SK-N-SH (cell line): ENCODE measurements at regions of chr20 and their contacts with region 1.

Region 1: DNA sequence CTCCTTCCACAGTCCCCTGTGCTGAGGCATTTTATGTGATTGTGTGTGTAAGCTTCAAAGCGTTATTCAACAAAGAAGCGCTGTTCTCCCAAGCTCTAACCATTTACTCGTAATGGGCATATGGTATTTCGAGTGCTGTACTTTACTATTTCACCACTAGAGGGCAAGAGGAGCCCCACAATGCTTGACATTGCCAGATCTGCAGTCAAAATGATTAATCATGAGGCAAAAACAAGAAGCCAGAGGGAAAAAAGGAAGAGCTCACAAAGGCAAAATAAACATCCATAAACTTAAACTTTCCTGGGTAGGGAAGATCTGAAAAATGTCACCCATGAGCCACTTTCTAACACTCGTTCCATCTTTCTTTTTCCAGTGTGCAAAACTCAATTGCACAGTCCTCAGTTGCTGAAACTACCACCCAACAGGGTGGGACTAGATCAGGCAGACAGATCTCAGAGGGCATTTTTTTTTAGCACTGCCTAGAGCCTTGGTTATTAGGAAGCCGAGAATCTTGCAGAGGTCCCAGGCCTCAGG is 215.0 kb upstream of the PLCB4 start:
- DNase-seq: peak; percentile 61
- H3K4me3 ChIP-seq: peak overlapping the region in 1 of 2 experiments; percentile 9; a peak in 1 of 4 replicates
- H3K27ac ChIP-seq: peak overlapping the region in 1 of 2 experiments; percentile 22; a peak in 1 of 4 replicates
- H3K4me1 ChIP-seq: peaks cover 3 to 11% of the 10 kb centered on the region in 2 experiments
- H3K27me3 ChIP-seq: no peaks in the 10 kb centered on the region
- CTCF ChIP-seq: peak; percentile 95
- EP300 ChIP-seq: no peak
- RAD21 ChIP-seq: peak; percentile 90

Region 2: DNA sequence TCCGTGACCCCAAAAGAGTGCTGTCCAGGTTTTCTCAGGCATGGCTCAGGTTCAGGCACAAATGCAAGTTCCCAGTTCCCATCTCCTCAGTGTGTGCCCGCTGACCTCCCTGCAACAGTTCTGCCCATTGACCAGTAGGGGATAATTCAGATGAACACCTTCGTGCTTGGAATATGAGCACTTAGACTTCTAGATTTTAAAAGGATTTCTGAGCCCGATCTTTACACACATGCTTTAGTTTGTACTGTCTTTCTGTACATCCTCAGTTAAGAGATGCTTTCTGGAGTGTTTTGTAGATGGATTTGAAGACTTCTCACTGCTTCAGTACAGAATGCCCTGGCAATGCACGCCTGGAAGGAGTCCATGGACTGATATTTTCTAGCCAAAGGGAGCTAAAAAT is 24.6 kb before region 1 on chr20:
- CTCF ChIA-PET with region 1: interaction called, 12 read pairs
- POLR2A ChIA-PET with region 1: no interaction called
- DNase-seq: no peak
- H3K4me3 ChIP-seq: no peak overlapping the region
- H3K27ac ChIP-seq: no peak overlapping the region
- H3K4me1 ChIP-seq: no peaks in the 10 kb centered on the region
- H3K27me3 ChIP-seq: no peaks in the 10 kb centered on the region
- CTCF ChIP-seq: peak; percentile 35
- EP300 ChIP-seq: no peak
- RAD21 ChIP-seq: no peak

Region 3: GRCh38 chr20:8842525-8842924 is 11.3 kb before region 1 on chr20:
- CTCF ChIA-PET with region 1: interaction called, 21 read pairs
- POLR2A ChIA-PET with region 1: no interaction called
- DNase-seq: no peak
- H3K4me3 ChIP-seq: no peak overlapping the region
- H3K27ac ChIP-seq: no peak overlapping the region
- H3K4me1 ChIP-seq: no peaks in the 10 kb centered on the region
- H3K27me3 ChIP-seq: no peaks in the 10 kb centered on the region
- CTCF ChIP-seq: no peak
- EP300 ChIP-seq: no peak
- RAD21 ChIP-seq: no peak

Region 4: DNA sequence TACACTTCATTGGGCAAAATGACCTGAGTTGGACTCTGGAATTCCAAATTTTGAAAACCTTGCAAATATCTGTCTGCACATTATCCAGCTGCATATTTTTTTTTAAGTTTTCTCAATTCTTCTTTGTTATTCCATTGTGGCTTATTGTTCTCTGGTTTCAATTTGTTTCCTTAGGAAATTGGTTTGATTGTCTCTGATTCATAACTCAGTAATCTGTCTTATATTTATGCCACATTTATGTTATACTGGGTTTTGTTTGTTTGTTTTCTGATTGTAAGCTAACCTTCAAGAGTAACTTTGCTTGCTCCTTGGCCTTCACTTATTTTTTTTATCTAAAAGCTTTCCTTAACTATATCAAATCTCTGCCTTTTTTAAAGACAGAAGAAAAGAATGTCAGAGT is 21.7 kb after region 1 on chr20:
- CTCF ChIA-PET with region 1: interaction called, 17 read pairs
- POLR2A ChIA-PET with region 1: no interaction called
- DNase-seq: no peak
- H3K4me3 ChIP-seq: no peak overlapping the region
- H3K27ac ChIP-seq: no peak overlapping the region
- H3K4me1 ChIP-seq: no peaks in the 10 kb centered on the region; a peak in 1 of 4 replicates
- H3K27me3 ChIP-seq: no peaks in the 10 kb centered on the region
- CTCF ChIP-seq: no peak
- EP300 ChIP-seq: no peak
- RAD21 ChIP-seq: no peak

Region 5: GRCh38 chr20:9068851-9069663 is 215.2 kb after region 1 on chr20 and contains the start of gene PLCB4:
- CTCF ChIA-PET with region 1: interaction called, 15 read pairs
- POLR2A ChIA-PET with region 1: no interaction called
- DNase-seq: peak; percentile 75
- H3K4me3 ChIP-seq: peak within 1 kb of the TSS; percentile 63 to 87
- H3K27ac ChIP-seq: peak within 1 kb of the TSS; percentile 77 to 96
- H3K4me1 ChIP-seq: peaks cover 8 to 19% of the 10 kb centered on the region in 2 experiments
- H3K27me3 ChIP-seq: no peaks in the 10 kb centered on the region
- CTCF ChIP-seq: no peak
- EP300 ChIP-seq: 0 out of 4 replicates have a peak, but pooled peaks of 1 of the 2 experiments have one; percentile 15
- RAD21 ChIP-seq: no peak
- polyA plus RNA-seq, gene PLCB4: 5.5 and 7.0 TPM in 2 replicates

Region 6: DNA sequence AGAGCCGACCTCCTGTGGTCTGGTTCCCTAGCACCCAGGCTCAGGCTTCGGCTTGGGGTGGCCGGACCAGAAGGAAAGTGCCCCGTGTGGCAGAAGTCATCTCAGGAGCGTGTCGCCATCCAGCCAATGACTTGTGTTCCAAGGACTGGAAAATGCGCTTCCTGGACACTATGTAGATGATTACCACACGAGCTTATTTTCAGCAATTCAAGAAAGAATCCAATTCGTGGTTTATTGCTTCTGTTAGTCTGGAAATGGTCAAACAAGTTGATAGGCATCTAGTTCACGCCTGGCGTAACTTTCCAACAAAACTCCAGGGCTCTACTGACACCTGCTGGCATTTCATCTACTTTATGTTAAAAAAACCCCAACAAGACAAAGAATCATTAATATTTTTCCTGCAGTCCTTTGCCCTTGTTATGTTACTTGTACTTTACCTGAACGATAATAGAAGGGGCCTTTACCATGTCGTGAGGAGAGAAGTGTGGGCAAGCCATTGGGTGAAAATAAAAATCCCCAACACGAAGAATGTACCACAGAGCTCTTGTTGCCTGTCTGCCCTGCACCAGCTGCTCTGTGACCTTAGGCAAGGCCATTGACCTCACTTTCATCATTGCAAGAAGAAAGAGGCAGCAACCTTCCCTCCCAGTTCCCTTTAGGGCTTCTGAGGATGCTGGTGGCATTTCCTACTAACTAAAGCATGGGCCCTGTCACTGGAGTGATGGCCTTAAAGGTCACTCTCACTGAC is 505.9 kb after region 1 on chr20:
- CTCF ChIA-PET with region 1: interaction called, 26 read pairs
- POLR2A ChIA-PET with region 1: no interaction called
- DNase-seq: peak; percentile 33
- H3K4me3 ChIP-seq: no peak overlapping the region; a peak in 1 of 4 replicates
- H3K27ac ChIP-seq: peak overlapping the region; percentile 11; a peak in 2 of 4 replicates
- H3K4me1 ChIP-seq: peaks cover 4 to 10% of the 10 kb centered on the region in 2 experiments; a peak in 1 of 4 replicates
- H3K27me3 ChIP-seq: no peaks in the 10 kb centered on the region
- CTCF ChIP-seq: peak; percentile 69
- EP300 ChIP-seq: no peak
- RAD21 ChIP-seq: peak; percentile 91

Region 7: DNA sequence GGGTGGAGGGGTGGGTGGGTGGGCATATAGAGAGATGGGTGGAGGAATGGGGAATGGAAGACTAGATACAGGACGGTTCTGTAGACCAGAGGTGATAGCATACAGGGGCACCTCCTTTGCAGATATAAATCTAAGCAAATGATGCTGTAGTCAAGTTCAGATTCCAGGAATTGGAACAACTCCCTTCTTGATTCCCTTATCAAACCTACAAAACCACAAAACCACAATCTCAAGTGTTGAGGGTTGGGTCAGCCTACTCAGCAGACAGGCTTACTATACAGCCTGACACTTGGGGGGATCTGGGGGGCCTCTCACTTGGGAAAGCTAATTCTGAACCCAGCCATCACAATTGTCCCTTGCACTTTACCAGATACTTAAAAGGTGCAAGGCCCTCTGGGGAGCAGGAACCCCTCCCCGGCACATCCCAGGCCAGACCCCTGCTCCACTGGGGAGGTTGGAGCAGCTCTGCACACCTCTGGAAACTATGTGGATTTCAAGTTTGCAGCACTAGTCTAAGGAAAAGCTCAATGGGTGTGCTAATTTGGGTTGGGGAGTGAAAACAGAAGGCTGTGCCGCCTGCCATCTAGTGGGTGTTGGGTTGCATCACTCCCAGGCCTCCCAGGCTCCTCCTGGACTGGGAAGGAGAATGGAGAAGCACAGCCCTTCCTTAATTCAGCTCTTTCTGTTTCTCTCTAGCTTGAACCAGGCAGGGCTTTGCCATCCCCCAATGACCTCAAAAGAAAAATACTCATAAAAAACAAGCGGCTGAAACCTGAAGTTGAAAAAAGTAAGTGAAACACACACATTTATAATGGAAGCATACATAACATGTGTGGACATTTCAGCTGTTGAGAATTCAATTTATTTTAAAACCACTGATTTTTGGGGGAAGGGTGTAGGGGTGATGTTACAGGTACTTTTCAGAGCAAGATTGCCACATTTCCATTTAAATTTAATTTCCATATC is 539.3 kb after region 1 on chr20:
- CTCF ChIA-PET with region 1: interaction called, 28 read pairs
- POLR2A ChIA-PET with region 1: no interaction called
- DNase-seq: peak; percentile 77
- H3K4me3 ChIP-seq: peak overlapping the region in 1 of 2 experiments; percentile 32; a peak in 1 of 4 replicates
- H3K27ac ChIP-seq: no peak overlapping the region
- H3K4me1 ChIP-seq: no peaks in the 10 kb centered on the region
- H3K27me3 ChIP-seq: no peaks in the 10 kb centered on the region
- CTCF ChIP-seq: peak; percentile 80
- EP300 ChIP-seq: no peak
- RAD21 ChIP-seq: peak; percentile 85